SK-N-SH (cell line): ENCODE measurements at regions of chr10 and their contacts with region 1.

Region 1: GRCh38 chr10:121900443-121901174 is 27.2 kb downstream of the ATE1 start:
- DNase-seq: peak; percentile 65
- H3K4me3 ChIP-seq: no peak overlapping the region
- H3K27ac ChIP-seq: no peak overlapping the region
- H3K4me1 ChIP-seq: no peaks in the 10 kb centered on the region; a peak in 2 of 4 replicates
- H3K27me3 ChIP-seq: no peaks in the 10 kb centered on the region
- CTCF ChIP-seq: peak; percentile 87
- EP300 ChIP-seq: no peak
- RAD21 ChIP-seq: peak; percentile 84

Region 2: GRCh38 chr10:120948889-120949608 is 951.6 kb before region 1 on chr10:
- CTCF ChIA-PET with region 1: interaction called, 12 read pairs
- POLR2A ChIA-PET with region 1: no interaction called
- DNase-seq: peak; percentile 86
- H3K4me3 ChIP-seq: no peak overlapping the region; a peak in 1 of 4 replicates
- H3K27ac ChIP-seq: no peak overlapping the region
- H3K4me1 ChIP-seq: no peaks in the 10 kb centered on the region; a peak in 1 of 4 replicates
- H3K27me3 ChIP-seq: no peaks in the 10 kb centered on the region
- CTCF ChIP-seq: peak; percentile 53
- EP300 ChIP-seq: no peak
- RAD21 ChIP-seq: peak; percentile 69

Region 3: GRCh38 chr10:121741248-121741792 is 159.3 kb before region 1 on chr10:
- CTCF ChIA-PET with region 1: interaction called, 17 read pairs
- POLR2A ChIA-PET with region 1: no interaction called
- DNase-seq: no peak
- H3K4me3 ChIP-seq: no peak overlapping the region
- H3K27ac ChIP-seq: no peak overlapping the region; a peak in 1 of 4 replicates
- H3K4me1 ChIP-seq: peaks cover 5 to 22% of the 10 kb centered on the region in 2 experiments; a peak in 2 of 4 replicates
- H3K27me3 ChIP-seq: no peaks in the 10 kb centered on the region
- CTCF ChIP-seq: no peak
- EP300 ChIP-seq: no peak
- RAD21 ChIP-seq: no peak

Region 4: GRCh38 chr10:121879476-121879875 is 21.1 kb before region 1 on chr10:
- CTCF ChIA-PET with region 1: interaction called, 80 read pairs
- POLR2A ChIA-PET with region 1: no interaction called
- DNase-seq: no peak
- H3K4me3 ChIP-seq: no peak overlapping the region
- H3K27ac ChIP-seq: no peak overlapping the region
- H3K4me1 ChIP-seq: no peaks in the 10 kb centered on the region
- H3K27me3 ChIP-seq: no peaks in the 10 kb centered on the region
- CTCF ChIP-seq: no peak
- EP300 ChIP-seq: no peak
- RAD21 ChIP-seq: no peak

Region 5: DNA sequence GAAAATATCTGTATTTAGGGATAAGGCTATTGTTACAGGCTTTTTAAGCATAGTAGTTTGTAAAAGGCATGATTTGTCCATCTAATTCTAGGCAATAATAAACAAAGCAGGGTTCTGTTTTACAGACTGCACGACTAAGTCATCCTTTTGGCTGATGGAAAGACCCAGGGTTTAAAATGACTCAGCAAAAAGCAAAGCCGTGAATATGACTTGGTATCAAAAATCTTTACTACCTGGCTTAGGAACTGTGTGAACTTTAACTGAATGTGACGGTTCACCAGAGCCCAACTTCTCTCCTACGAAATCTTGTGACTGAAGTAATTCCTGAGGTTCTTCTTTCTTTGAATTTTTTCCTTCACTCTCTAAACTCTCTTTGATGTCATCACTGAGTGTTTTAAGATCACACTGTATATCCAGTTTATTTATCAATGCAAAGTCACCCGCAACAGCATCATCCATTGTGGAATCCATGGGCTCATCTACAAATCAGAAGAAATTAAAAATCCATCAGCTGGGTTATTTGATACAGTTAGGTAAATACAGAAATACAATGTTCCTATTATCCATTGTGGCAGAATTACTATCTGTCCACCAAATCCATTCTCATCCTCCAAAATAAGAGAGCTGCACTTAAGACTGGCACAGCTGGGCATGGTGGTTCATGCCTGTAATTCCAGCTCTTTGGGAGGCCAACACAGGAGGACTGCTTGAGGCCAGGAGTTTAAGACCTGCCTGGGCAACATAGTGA is 10.2 kb after region 1 on chr10:
- CTCF ChIA-PET with region 1: interaction called, 20 read pairs
- POLR2A ChIA-PET with region 1: no interaction called
- DNase-seq: no peak
- H3K4me3 ChIP-seq: no peak overlapping the region
- H3K27ac ChIP-seq: peak overlapping the region in 1 of 2 experiments; percentile 14; a peak in 2 of 4 replicates
- H3K4me1 ChIP-seq: no peaks in the 10 kb centered on the region
- H3K27me3 ChIP-seq: no peaks in the 10 kb centered on the region
- CTCF ChIP-seq: no peak
- EP300 ChIP-seq: no peak
- RAD21 ChIP-seq: no peak

Region 6: GRCh38 chr10:121988356-121989316 is 88.0 kb after region 1 on chr10 and contains the start of gene TACC2:
- CTCF ChIA-PET with region 1: no interaction called
- POLR2A ChIA-PET with region 1: no interaction called
- DNase-seq: no peak
- H3K4me3 ChIP-seq: no peak within 1 kb of the TSS
- H3K27ac ChIP-seq: no peak within 1 kb of the TSS
- H3K4me1 ChIP-seq: no peaks in the 10 kb centered on the region
- H3K27me3 ChIP-seq: no peaks in the 10 kb centered on the region
- CTCF ChIP-seq: no peak
- EP300 ChIP-seq: no peak
- RAD21 ChIP-seq: no peak
- polyA plus RNA-seq, gene TACC2: 5.3 and 8.8 TPM in 2 replicates